Prostate gland (tissue), 2 donors: ENCODE measurements at regions of chr10 and their contacts with region 1.

Region 1: DNA sequence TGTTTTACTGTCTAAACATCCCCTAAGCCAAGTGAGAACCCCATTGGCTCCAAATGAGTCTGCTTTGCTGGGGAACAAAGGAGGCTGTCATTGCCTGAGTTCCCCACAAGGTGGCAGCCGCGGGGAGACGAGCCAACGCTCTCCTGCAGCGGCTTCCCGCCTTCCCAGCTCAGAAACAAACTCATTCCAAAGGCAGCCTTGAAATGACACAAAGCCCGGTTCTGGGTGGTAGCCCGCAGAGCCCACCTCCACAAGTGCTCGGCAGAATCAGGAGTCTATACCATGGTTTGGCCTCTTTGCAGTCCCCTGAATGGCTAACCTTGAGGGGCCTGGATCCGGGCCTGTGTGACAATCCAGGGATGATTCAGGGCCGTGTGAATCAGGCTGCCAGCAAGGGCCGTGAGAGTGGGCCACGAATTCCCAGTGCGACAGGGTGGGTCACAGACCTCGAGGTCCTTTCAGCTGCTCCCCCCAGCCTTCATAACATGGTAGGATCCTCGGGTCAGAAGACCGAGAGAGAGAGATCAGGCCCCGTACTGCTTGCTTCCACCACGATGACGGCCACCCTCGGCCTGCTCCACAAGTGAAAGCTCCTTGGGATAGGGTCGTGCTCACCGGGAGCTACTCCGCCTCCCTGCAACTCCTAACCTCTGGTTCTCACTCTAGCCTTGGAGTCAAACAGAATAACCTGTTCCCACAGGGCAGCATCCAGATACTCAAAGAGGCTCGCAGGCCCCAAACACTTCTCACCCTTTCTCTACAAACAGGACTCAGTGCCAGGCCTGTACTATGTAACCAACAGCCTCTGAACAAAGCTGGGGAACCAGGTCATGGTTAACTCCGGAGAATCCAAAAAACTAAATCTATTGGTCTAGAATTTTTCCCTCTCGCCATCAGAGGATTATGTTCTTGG is 79.6 kb downstream of the DLG5 start:
- DNase-seq: peak; percentile 81
- H3K4me3 ChIP-seq: no peak overlapping the region
- H3K27ac ChIP-seq: peak overlapping the region; percentile 78 to 81
- H3K4me1 ChIP-seq: peaks cover 13% of the 10 kb centered on the region
- H3K27me3 ChIP-seq: no peaks in the 10 kb centered on the region
- CTCF ChIP-seq: peak; percentile 96 to 98 (median 98)
- POLR2A ChIP-seq: no peak

Region 2: GRCh38 chr10:77926566-77927401 is 79.8 kb after region 1 on chr10 and contains the start of gene DLG5:
- intact Hi-C with region 1: loop called (anchors 2 kb)
- DNase-seq: peak; percentile 76
- H3K4me3 ChIP-seq: peak within 1 kb of the TSS; percentile 58 to 84
- H3K27ac ChIP-seq: peak within 1 kb of the TSS; percentile 93 to 95
- H3K4me1 ChIP-seq: peaks cover 4% of the 10 kb centered on the region
- H3K27me3 ChIP-seq: no peaks in the 10 kb centered on the region
- CTCF ChIP-seq: peak in 2 of 4 experiments; percentile 33 to 49
- POLR2A ChIP-seq: peak; percentile 43
- total RNA-seq, gene DLG5: 72.3 to 134 TPM

Region 3: DNA sequence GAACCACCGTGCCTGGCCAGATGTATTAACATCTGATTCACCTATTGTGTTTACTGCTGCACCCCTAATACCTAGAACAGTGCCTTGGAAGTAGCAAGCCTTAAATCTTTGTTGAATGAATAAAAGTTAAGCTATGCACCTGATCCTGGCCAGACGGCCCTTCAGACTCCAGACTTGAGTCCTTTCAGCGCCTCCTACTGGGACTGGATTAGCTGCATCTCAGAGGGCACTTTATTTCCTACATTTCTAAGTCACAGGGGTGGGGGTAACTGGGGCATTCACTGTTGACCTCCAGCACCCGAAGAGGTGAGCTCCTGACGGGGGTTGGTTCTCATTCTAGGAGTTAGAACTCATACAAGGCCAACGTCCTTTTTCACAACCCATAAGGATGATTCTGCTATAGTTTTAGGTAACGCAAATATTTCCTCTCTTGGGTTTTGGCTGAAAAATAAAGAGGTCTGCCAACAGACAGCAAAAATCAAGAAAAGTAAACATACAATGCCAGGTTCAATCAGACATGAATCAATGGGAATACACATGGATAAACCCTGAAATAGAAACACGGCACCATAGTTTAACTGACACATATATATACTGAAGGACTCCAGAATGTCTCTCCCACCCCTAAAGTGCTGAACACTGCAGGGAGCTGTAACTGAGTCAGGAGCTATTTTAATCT is 127.6 kb after region 1 on chr10:
- intact Hi-C with region 1: loop called (anchors 5 kb)
- DNase-seq: no peak
- H3K4me3 ChIP-seq: no peak overlapping the region
- H3K27ac ChIP-seq: peak overlapping the region; percentile 60 to 68
- H3K4me1 ChIP-seq: peaks cover 2% of the 10 kb centered on the region
- H3K27me3 ChIP-seq: no peaks in the 10 kb centered on the region
- CTCF ChIP-seq: peak in 3 of 4 experiments; percentile 8 to 33 (median 29)
- POLR2A ChIP-seq: no peak

Region 4: DNA sequence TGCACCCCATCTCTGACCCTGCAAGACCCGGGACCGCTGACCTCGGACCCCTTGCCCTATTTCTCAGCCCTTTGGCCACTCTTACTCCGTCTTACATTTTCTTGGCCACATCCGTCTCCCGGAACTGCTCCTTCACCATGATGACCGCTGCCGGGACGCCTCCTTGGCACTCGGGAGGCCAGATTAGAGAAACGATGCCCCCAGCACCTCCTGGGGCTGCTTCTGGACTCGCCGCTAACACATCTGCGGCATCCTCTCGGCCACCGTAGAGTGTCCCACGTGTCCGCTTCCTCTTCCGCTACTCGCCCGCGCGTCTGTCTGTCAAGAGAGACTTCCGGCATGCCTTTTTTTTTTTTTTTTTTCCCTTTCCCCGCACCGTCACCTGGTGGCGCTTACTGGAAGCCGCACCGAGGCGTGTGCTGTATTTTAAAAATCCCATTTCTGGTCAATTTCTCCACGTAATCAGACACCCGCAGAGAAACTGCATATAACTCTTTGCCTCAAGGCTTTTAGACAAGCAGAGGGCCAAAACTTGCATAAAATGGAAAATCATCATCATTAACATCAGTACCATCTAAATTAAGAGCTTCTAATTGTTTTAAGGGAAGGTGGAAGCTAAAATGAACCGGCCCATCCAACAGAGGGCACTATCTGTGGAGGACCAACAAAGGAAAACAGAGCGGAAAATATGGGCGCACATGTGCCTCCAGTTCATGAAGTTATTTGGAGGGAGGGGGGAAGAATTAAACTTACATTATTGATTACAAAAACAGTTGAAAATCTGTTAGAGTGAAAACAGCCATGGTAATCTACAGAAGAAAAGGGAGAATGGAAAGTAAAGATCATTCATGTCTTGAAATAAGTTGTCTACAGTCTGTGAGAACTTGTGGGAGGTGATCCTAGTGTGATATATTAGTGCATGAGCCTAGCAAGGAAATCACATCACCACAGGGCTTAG is 182.6 kb after region 1 on chr10 and contains the start of gene POLR3A:
- intact Hi-C with region 1: loop called (anchors 1 kb)
- DNase-seq: peak; percentile 91
- H3K4me3 ChIP-seq: peak within 1 kb of the TSS; percentile 97
- H3K27ac ChIP-seq: peak within 1 kb of the TSS; percentile 46 to 82
- H3K4me1 ChIP-seq: peaks cover 5% of the 10 kb centered on the region
- H3K27me3 ChIP-seq: no peaks in the 10 kb centered on the region
- CTCF ChIP-seq: peak; percentile 81 to 97 (median 90)
- POLR2A ChIP-seq: peak; percentile 20
- total RNA-seq, gene POLR3A: 17.5 to 18.7 TPM